ENCODE measurements at regions of chr12 and their contacts with region 1.

Region 1: DNA sequence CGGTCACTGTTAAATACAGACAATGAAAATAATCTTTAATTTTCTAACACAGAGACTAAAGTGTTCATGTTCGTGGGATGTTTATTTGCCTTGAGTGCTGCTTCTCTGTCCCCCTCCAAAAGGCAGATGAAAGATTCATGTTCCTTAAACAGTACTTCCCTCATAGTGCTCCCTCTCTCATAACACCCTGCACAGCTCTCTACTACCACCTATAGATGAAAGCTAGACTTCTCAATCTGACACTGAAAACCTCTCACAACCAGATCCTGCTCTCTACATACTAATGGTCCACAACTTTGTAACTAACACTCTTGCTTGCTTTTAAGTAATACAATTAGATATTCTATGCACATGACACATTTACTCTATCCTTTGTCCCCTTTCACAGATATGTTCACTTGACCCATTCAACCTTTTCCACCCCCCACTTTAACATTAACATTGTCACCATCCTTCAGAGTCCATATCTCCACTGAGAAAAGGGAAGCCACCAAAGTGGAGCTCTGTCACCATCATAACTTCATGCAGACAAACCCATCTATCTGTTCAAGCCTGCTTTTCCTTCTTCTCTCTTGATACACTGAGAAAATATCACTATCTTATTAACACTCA is 266.4 kb upstream of the USP15 start:
- DNase-seq: peak; percentile 61 to 82 (median 79)
- H3K4me3 ChIP-seq: no peak overlapping the region
- H3K27ac ChIP-seq: no peak overlapping the region
- H3K4me1 ChIP-seq: peaks cover 0 to 22% (median 4%) of the 10 kb centered on the region in 4 experiments
- H3K27me3 ChIP-seq: no peaks in the 10 kb centered on the region

Region 2: DNA sequence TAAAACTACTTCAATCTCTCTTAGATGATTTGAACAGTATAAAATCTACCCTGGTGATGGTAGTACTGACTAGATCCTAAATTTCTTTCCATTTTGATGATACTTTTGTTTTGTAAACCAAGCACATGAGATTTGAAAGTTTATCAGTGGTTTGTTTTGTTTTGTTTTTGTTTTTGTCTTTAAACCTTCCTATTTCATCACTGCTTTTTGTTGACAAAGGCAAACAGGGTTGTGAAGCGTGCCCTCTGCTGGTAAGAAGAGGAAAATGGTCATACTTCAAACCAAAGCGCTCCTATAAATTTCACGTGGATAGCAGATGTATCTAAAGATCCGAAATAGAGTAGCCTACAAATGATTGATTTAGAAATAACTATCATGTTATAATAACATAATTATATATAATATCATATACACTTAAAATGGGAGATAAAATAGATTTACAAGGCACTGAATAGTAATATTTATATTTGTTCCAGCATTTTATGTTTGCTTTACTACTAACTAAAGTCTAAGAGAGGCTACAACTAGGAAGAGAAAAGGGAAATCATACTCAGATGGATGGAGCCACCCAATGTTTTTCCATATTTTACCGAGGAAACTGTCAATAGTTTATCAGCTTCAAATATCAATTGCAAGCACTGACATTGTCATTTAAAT is 12.4 kb after region 1 on chr12:
- CTCF ChIA-PET with region 1: interaction called, 22 read pairs
- POLR2A ChIA-PET with region 1: no interaction called
- DNase-seq: peak; percentile 57 to 72 (median 71)
- H3K4me3 ChIP-seq: no peak overlapping the region
- H3K27ac ChIP-seq: no peak overlapping the region
- H3K4me1 ChIP-seq: no peaks in the 10 kb centered on the region
- H3K27me3 ChIP-seq: no peaks in the 10 kb centered on the region

Measured in common myeloid progenitor, CD34-positive (primary cell).